ENCODE measurements at regions of chr3 and their contacts with region 1.

Region 1: GRCh38 chr3:157354722-157355121 is 81.9 kb upstream of the PTX3 start:
- H3K4me3 Mint-ChIP-seq: no peak overlapping the region
- H3K27ac Mint-ChIP-seq: no peak overlapping the region
- H3K4me1 Mint-ChIP-seq: no peaks in the 10 kb centered on the region
- H3K27me3 Mint-ChIP-seq: peaks cover 6% of the 10 kb centered on the region

Region 2: DNA sequence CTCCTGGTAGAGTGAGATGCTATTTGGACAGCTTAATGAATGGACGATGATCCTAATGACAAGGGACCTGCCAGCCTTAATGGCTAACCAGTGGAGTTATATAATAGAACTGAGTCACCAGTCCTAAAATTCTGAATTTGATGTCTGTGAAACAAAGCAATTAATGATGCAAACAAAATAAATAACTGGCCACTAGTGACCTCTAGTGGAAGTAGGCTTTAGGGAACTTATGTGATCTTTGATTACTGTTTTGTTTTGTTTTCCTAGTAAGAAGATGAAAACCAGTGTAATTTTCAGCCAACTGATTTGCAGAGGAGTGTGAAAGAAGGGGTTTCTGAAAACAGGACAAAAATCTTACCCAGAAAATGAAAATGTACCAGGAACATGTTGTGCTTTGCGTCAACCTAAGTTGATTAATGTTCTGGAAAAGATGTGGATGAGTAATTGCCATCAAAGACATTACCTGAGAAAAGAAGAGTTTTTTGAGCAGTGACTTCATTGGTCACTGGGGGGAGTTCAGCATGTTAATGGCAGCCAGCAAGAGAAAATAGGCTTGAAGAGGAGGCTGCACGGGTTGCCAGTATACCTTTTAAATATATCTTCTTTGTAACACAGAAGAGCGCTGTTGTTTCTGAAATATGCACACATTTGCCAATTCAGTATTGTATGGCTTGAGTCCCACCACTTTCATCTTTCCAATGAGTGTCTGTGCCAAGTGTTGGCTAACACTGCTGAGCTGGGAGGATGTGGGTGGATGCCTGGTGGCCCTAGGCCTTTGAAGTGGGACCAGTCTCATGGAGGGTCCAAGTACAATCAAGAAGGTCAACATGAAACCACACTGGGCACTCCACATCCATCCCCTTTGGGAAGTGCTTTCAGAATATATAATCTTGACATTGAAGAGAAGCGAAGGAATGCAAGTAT is 139.2 kb after region 1 on chr3:
- intact Hi-C with region 1: loop called (anchors 10 kb)
- H3K4me3 Mint-ChIP-seq: no peak overlapping the region
- H3K27ac Mint-ChIP-seq: no peak overlapping the region
- H3K4me1 Mint-ChIP-seq: peaks cover 5% of the 10 kb centered on the region
- H3K27me3 Mint-ChIP-seq: peaks cover 25% of the 10 kb centered on the region

Region 3: GRCh38 chr3:157606011-157606851 is 251.5 kb after region 1 on chr3:
- intact Hi-C with region 1: no loop called
- H3K4me3 Mint-ChIP-seq: peak overlapping the region; percentile 34
- H3K27ac Mint-ChIP-seq: no peak overlapping the region
- H3K4me1 Mint-ChIP-seq: peaks cover 13% of the 10 kb centered on the region
- H3K27me3 Mint-ChIP-seq: peaks cover 20% of the 10 kb centered on the region

Region 4: DNA sequence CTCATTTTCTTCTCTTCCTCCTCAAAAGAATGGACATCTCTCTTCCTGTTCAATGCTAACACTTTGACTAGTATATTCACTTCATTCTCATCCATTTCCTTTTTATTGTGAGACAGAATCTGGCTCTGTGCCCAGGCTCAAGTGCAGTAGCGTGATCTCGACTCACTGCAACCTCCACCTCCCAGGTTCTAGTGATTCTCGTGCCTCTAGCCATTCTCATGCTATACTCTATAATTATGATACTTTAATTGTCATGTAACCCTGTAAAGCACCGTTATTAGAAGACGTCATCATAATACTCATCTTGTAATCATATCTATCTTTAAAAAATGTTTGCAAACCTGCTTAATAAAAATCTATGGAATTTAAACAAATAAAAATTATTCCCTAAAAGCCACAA is 644.5 kb after region 1 on chr3:
- intact Hi-C with region 1: no loop called
- H3K4me3 Mint-ChIP-seq: no peak overlapping the region
- H3K27ac Mint-ChIP-seq: no peak overlapping the region
- H3K4me1 Mint-ChIP-seq: no peaks in the 10 kb centered on the region
- H3K27me3 Mint-ChIP-seq: no peaks in the 10 kb centered on the region

Measured in dendritic cell treated with granulocyte-macrophage colony-stimulating factor and Interleukin-4, amounts not matched to agents 40 ng/mL and 50 ng/mL, for 4 days (primary cell).